Posterior vena cava (tissue), 2 donors: ENCODE measurements at regions of chr19 and their contacts with region 1.

Region 1: GRCh38 chr19:44694184-44694579 is 4.8 kb upstream of the CEACAM16 start:
- DNase-seq: no peak

Region 2: DNA sequence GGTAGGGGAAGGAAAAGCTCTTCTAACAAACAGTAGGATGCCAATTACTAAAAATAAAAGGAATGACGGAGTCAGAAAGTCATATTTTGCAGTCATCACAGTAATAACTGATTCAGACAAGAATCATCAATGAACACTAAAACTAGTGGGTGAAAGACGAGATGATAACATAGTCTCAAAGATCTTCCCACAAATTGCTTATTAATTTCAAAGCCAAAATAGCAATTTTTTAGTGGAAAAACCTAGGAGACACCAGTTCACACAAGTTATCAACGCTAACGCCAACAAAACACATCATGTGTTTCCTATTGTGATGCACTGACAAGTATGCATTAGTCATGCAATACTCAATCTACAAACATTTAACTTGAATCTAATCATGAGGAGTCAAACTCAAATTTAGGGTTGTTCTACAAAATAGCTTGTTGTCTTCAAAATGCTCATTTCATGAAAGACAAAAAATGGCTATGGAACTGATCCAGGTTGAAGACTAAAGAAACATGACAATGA is 415.9 kb before region 1 on chr19:
- intact Hi-C with region 1: loop called in 1 of 2 experiments (anchors 10 kb)
- DNase-seq: no peak

Region 3: GRCh38 chr19:44712864-44713515 is 18.8 kb after region 1 on chr19:
- intact Hi-C with region 1: loop called in 1 of 2 experiments (anchors 2 kb)
- DNase-seq: no peak

Region 4: GRCh38 chr19:44746946-44747738 is 53.0 kb after region 1 on chr19:
- intact Hi-C with region 1: no loop called
- DNase-seq: peak; percentile 99

Region 5: GRCh38 chr19:44954824-44955586 is 260.8 kb after region 1 on chr19 and contains the start of gene CLPTM1:
- intact Hi-C with region 1: no loop called
- DNase-seq: peak; percentile 99
- total RNA-seq, gene CLPTM1: 69.9 to 78.5 TPM